Activated CD4-positive, alpha-beta memory T cell treated with anti-CD3 and anti-CD28 coated beads, Interleukin-2, amount 10 ng/mL, durations not matched to agents 7 days and 5 days (primary cell): ENCODE measurements at regions of chr7 and their contacts with region 1.

Region 1: GRCh38 chr7:101185258-101185839 is 5.3 kb upstream of the NAT16 start:
- DNase-seq: no peak
- H3K4me3 Mint-ChIP-seq: no peak overlapping the region
- H3K27ac Mint-ChIP-seq: no peak overlapping the region
- H3K4me1 Mint-ChIP-seq: no peaks in the 10 kb centered on the region
- H3K27me3 Mint-ChIP-seq: peaks cover 34% of the 10 kb centered on the region

Region 2: GRCh38 chr7:101094416-101095375 is 90.7 kb before region 1 on chr7:
- CTCF ChIA-PET with region 1: interaction called, 17 read pairs
- POLR2A ChIA-PET with region 1: no interaction called
- DNase-seq: peak; percentile 29
- H3K4me3 Mint-ChIP-seq: no peak overlapping the region
- H3K27ac Mint-ChIP-seq: no peak overlapping the region
- H3K4me1 Mint-ChIP-seq: peaks cover 16% of the 10 kb centered on the region
- H3K27me3 Mint-ChIP-seq: peaks cover 2% of the 10 kb centered on the region

Region 3: DNA sequence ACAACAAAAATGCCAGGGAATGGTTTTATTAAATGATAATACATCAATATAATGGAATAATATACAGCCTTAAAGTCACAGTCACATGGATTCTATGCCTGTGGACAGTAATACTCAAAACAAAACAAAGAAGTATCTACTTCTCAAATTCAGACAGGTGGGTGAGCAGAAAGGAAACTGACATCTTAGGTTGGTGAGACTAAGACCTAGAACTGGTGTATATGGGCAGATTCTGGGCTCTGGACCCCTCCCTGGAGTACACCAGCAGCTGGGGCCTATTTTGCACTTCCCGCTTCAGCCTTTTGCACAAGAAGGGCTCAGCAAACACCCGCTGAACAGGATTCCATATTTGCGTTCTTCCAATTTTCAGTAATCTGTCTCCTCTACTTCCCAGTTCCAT is 65.0 kb after region 1 on chr7:
- CTCF ChIA-PET with region 1: no interaction called
- POLR2A ChIA-PET with region 1: no interaction called
- DNase-seq: no peak
- H3K4me3 Mint-ChIP-seq: peak overlapping the region; percentile 92
- H3K27ac Mint-ChIP-seq: peak overlapping the region; percentile 42
- H3K4me1 Mint-ChIP-seq: peaks cover 31% of the 10 kb centered on the region
- H3K27me3 Mint-ChIP-seq: no peaks in the 10 kb centered on the region